Endothelial cell of umbilical vein (primary cell): ENCODE measurements at regions of chr20 and their contacts with region 1.

Region 1: DNA sequence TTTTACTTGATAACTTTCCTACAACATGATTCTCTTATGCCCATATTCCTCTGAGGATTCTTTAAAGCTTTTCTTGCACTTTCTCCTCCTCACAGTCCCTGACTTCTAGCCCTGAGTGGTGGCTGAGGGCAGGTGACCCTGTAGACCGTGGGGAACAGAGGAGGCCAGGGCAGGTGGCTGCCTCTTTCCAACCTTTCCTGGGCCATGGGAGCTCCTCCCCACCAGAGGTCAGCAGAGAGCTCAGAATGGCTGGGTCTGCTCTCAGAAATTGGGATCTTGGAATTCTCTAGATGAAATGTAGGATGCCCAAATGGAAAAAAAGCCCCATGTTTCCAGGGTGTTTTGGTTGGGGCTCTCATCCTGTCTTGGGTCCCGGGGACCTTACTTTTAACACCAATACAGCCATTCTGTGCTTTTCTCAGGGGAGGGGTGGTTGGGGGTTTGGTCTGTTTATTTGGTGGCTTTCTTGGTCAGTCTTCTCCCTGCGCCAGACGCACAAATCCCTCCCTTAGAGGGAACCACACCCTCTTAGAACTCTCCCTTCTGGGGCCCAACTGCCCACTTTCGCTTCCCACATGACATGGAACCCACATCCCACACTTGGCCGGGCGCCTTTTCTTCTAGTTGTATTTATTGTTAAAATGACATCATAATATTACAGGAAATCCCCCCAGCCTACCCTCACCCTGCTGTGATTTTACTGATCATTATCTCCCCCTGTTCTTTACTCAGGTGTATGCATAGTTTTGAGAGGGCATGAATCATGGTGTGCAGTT is 17.9 kb downstream of the GNAS start:
- DNase-seq: peak; percentile 63
- H3K4me3 ChIP-seq: no peak overlapping the region
- H3K27ac ChIP-seq: no peak overlapping the region
- H3K4me1 ChIP-seq: peaks cover 15% of the 10 kb centered on the region
- H3K27me3 ChIP-seq: peaks cover 12 to 15% of the 10 kb centered on the region in 2 experiments
- CTCF ChIP-seq: peak; percentile 88 to 94
- POLR2A ChIP-seq: no peak

Region 2: GRCh38 chr20:58481481-58482021 is 388.9 kb before region 1 on chr20:
- CTCF ChIA-PET with region 1: interaction called, 21 read pairs
- POLR2A ChIA-PET with region 1: no interaction called
- dilution Hi-C with region 1: no loop called
- intact Hi-C with region 1: loop called (anchors 1 kb)
- DNase-seq: peak; percentile 46
- H3K4me3 ChIP-seq: no peak overlapping the region
- H3K27ac ChIP-seq: no peak overlapping the region
- H3K4me1 ChIP-seq: peaks cover 4% of the 10 kb centered on the region
- H3K27me3 ChIP-seq: no peaks in the 10 kb centered on the region
- CTCF ChIP-seq: peak; percentile 74 to 88
- POLR2A ChIP-seq: no peak

Region 3: DNA sequence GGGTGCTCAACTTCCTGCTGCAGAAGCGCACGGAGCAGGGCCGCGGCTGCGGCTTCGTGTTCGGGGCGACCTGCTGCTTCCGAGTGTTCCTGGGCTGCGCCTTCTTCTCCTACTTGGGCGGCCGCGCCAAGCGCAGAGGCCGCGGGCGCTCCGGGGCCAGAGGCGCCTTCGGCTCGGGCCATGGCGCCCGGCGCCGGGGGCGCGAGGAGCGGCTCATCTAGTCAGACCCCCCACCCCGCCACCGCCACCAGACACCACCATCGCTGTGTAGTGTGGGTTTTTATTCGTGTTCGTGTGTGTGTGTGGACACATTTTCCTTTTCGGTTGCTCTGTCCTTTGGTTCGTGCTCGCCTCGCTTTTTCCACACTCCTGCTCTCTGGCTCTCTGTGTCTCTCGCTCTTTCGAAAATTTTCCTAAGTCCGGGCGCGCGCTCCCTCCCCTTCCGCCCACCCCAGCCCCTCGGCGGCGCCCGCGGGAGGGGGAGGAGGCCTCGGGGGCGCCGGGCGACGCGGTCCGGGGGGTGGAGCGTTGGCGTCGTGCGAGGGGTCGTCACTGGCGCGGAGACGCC is 20.2 kb after region 1 on chr20:
- CTCF ChIA-PET with region 1: interaction called, 13 read pairs
- POLR2A ChIA-PET with region 1: no interaction called
- dilution Hi-C with region 1: no loop called
- intact Hi-C with region 1: loop called (anchors 2 kb)
- DNase-seq: peak; percentile 87
- H3K4me3 ChIP-seq: peak overlapping the region; percentile 17 to 91 (median 70)
- H3K27ac ChIP-seq: peak overlapping the region; percentile 47
- H3K4me1 ChIP-seq: peaks cover 30% of the 10 kb centered on the region
- H3K27me3 ChIP-seq: peaks cover 2% of the 10 kb centered on the region in 2 experiments
- CTCF ChIP-seq: no peak
- POLR2A ChIP-seq: peak; percentile 25

Region 4: DNA sequence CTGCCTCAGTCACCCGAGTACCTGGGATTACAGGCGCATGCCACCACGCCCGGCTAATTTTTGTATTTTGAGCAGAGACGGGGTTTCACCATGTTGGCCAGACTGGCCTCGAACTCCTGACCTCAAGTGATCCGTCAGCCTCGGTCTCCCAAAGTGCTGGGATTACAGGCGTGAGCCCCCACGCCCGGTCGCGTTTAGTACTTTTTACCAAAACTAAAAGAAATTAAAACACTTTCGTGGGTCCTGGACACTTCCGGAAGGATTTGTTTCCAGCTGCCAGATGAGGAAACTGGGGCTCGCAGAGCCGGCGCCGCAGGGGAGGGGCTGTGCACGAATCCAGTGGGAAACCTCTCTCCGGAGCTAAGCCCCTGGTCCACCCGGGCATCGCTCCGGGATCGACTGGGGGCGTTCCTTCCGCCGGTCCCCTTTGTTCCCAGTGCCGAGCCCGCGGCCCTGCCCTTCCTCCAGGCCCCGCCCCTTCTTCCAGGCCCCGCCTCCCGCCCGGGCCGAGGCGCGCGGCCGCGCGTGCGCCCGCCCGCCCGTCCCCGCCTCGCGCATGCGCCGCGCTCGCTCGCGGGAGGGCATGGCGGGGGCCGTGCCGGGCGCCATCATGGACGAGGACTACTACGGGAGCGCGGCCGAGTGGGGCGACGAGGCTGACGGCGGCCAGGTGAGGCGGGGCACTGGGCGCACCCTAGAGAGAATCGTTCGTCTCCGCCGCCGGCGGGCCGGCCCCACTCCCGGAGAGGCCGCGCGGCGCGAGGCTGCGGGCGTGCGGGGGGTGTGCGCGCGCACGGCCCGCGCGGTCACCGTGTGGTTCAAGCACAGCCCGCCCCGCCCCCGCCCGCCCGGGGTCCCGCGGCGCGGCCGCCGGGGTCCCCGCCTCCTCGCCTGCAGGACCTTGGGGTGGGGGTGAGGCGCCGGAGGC is 110.5 kb after region 1 on chr20 and contains the start of gene NELFCD:
- CTCF ChIA-PET with region 1: interaction called, 12 read pairs
- POLR2A ChIA-PET with region 1: no interaction called
- dilution Hi-C with region 1: no loop called
- intact Hi-C with region 1: loop called (anchors 1 kb)
- DNase-seq: peak; percentile 79
- H3K4me3 ChIP-seq: peak within 1 kb of the TSS; percentile 84 to 98 (median 96)
- H3K27ac ChIP-seq: peak within 1 kb of the TSS; percentile 48
- H3K4me1 ChIP-seq: peaks cover 3% of the 10 kb centered on the region
- H3K27me3 ChIP-seq: peaks cover 0 to 1% of the 10 kb centered on the region in 2 experiments
- CTCF ChIP-seq: no peak
- POLR2A ChIP-seq: peak; percentile 79
- total RNA-seq, gene NELFCD: 92.5 and 93.2 TPM in 2 replicates

Region 5: GRCh38 chr20:59087829-59088433 is 217.5 kb after region 1 on chr20:
- CTCF ChIA-PET with region 1: interaction called, 16 read pairs
- POLR2A ChIA-PET with region 1: no interaction called
- dilution Hi-C with region 1: no loop called
- intact Hi-C with region 1: loop called (anchors 1 kb)
- DNase-seq: peak; percentile 57
- H3K4me3 ChIP-seq: no peak overlapping the region
- H3K27ac ChIP-seq: no peak overlapping the region
- H3K4me1 ChIP-seq: no peaks in the 10 kb centered on the region
- H3K27me3 ChIP-seq: peaks cover 8 to 15% of the 10 kb centered on the region in 2 experiments
- CTCF ChIP-seq: peak; percentile 83 to 90
- POLR2A ChIP-seq: no peak

Region 6: DNA sequence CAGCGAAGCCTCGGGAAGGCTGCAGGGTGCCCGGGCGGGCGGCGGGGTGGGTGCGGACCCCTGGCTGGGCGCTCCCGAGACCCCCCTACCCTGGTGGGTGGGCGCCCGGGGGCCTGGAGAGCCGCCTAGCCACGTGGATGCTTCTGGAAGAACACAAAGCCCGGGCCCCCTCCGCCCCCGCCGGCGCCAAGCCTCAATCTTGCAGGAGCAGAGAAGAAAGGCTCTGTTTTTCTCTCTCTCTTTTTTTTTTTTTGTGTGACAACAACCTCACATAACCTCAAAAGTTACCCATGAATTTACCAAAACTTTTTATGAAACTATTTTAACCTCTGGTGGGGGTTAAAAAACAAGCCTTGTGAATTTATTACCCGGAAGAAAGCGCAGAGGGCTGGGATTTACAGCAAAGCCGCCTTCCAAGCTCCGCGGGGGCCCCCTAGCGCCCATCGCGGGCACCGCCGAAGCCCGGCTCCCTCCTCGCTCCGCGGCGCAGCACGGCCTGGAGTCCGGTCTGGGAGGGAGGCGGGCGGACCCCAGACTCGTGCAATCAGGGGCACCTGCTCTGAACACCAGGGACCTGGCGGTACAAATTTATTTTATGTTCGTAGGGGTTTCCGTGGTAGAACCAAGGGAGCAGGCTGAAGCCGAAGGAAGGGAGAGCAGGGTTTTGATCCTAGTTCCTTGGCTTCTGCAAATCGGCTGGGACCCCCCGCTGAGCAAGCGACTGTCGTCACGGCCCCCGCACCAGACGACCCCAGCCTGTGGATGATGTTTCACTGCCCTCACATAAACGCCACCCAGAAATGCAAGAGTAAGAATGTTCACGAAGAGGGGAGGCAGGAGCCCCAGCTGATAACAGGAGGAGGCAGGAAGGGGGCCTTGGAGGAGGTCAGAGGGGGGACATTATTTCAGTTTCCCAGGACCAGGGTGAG is 352.1 kb after region 1 on chr20:
- CTCF ChIA-PET with region 1: interaction called, 92 read pairs
- POLR2A ChIA-PET with region 1: no interaction called
- dilution Hi-C with region 1: no loop called
- intact Hi-C with region 1: loop called (anchors 1 kb)
- DNase-seq: peak; percentile 74
- H3K4me3 ChIP-seq: peak overlapping the region; percentile 42 to 71 (median 61)
- H3K27ac ChIP-seq: no peak overlapping the region
- H3K4me1 ChIP-seq: peaks cover 7% of the 10 kb centered on the region
- H3K27me3 ChIP-seq: peaks cover 20% of the 10 kb centered on the region in 2 experiments
- CTCF ChIP-seq: peak; percentile 96 to 97
- POLR2A ChIP-seq: no peak

Region 7: DNA sequence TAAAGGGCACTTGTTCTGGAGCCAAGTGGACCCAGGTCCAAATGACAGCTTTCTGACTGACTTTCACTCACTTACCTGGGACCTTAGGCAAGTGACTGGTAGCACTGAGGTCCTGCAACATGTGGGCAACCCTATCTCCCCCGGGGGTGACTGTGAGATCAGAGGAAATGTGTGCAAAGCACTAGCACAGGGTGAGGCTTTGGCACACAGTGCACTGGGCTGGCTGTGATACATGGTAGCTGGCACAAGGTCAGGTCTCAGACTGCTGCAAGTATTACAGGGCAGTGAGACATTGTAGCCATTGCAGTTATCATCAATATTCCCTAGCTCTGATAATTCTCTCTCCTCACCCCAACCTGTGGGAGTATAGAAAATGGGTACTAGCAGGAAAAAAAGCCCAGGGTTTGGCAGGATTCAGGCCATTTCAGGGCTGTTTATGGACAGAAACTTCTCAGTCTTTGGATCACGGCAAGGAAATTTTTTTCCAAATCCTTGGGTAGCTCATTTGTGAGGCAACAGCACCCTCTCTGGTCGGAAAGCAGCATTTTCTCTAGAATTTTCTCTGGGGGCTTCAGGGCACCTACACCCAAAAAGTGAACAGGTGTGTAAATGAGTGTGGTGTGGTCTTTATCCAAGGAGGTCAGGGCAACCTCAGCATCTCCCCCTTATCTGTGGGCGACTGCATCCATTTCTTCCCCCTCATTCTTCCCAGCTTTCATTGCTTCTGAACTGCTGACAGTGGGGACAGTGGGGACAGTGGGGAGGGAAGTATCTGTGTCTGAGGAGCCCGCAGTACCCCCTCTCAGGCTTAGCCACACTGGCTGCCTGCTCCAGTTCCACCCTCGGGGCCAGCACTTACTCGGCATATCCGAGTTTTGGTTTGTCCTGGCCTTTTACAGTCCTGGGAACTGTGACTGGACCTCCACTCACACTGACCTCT is 585.2 kb after region 1 on chr20:
- CTCF ChIA-PET with region 1: interaction called, 8 read pairs
- POLR2A ChIA-PET with region 1: interaction called, 3 read pairs
- dilution Hi-C with region 1: no loop called
- intact Hi-C with region 1: loop called (anchors 2 kb)
- DNase-seq: peak; percentile 9
- H3K4me3 ChIP-seq: no peak overlapping the region
- H3K27ac ChIP-seq: no peak overlapping the region
- H3K4me1 ChIP-seq: no peaks in the 10 kb centered on the region
- H3K27me3 ChIP-seq: no peaks in the 10 kb centered on the region
- CTCF ChIP-seq: peak in 1 of 2 donors; percentile 39
- POLR2A ChIP-seq: no peak